Transverse colon (tissue), 4 donors: ENCODE measurements at regions of chr6 and their contacts with region 1.

Region 1: DNA sequence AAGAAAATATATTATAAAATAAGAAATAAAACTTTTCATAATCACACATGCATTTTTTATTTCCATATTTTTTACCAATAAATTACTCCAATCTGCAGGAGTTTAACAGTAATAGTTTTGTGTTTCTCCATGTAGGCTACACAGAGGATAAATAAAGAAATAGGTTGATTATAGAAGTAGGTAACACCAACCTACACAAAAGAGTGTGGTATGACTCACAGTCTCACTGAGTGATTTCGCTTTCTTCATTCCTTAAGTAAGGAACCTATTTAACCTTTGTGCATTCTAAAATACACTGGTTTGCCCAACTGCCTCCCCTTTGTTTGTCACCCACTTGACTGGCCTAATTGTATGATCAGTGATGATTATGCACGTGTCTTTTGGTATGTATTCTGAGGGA is 244.2 kb upstream of the RIMS1 start:
- DNase-seq: no peak
- H3K4me3 ChIP-seq: no peak overlapping the region
- H3K27ac ChIP-seq: no peak overlapping the region
- H3K4me1 ChIP-seq: no peaks in the 10 kb centered on the region
- H3K27me3 ChIP-seq: no peaks in the 10 kb centered on the region
- CTCF ChIP-seq: no peak
- EP300 ChIP-seq: no peak
- POLR2A ChIP-seq: no peak

Region 2: GRCh38 chr6:71103130-71103529 is 539.0 kb before region 1 on chr6:
- in situ Hi-C with region 1: no loop called
- intact Hi-C with region 1: loop called (anchors 5 kb)
- DNase-seq: no peak
- H3K4me3 ChIP-seq: no peak overlapping the region
- H3K27ac ChIP-seq: no peak overlapping the region
- H3K4me1 ChIP-seq: no peaks in the 10 kb centered on the region
- H3K27me3 ChIP-seq: no peaks in the 10 kb centered on the region
- CTCF ChIP-seq: no peak
- EP300 ChIP-seq: no peak
- POLR2A ChIP-seq: no peak